ENCODE measurements at regions of chr13 and their contacts with region 1.

Region 1: GRCh38 chr13:93227878-93228642 is 1.5 kb downstream of the GPC6 start:
- DNase-seq: peak; percentile 90
- H3K4me3 ChIP-seq: peak overlapping the region; percentile 45 to 92 (median 84)
- H3K27ac ChIP-seq: peak overlapping the region; percentile 46
- H3K4me1 ChIP-seq: peaks cover 20% of the 10 kb centered on the region
- H3K27me3 ChIP-seq: no peaks in the 10 kb centered on the region
- CTCF ChIP-seq: peak; percentile 24 to 69

Region 2: GRCh38 chr13:92658293-92658692 is 569.8 kb before region 1 on chr13:
- CTCF ChIA-PET with region 1: no interaction called
- dilution Hi-C with region 1: no loop called
- in situ Hi-C with region 1: no loop called
- intact Hi-C with region 1: no loop called
- DNase-seq: no peak
- H3K4me3 ChIP-seq: no peak overlapping the region
- H3K27ac ChIP-seq: no peak overlapping the region
- H3K4me1 ChIP-seq: no peaks in the 10 kb centered on the region
- H3K27me3 ChIP-seq: no peaks in the 10 kb centered on the region
- CTCF ChIP-seq: no peak

Region 3: GRCh38 chr13:92967923-92968322 is 260.1 kb before region 1 on chr13:
- CTCF ChIA-PET with region 1: no interaction called
- dilution Hi-C with region 1: no loop called
- in situ Hi-C with region 1: no loop called
- intact Hi-C with region 1: loop called (anchors 1 kb)
- DNase-seq: peak; percentile 9
- H3K4me3 ChIP-seq: no peak overlapping the region
- H3K27ac ChIP-seq: no peak overlapping the region
- H3K4me1 ChIP-seq: no peaks in the 10 kb centered on the region
- H3K27me3 ChIP-seq: no peaks in the 10 kb centered on the region
- CTCF ChIP-seq: peak; percentile 21 to 56

Region 4: DNA sequence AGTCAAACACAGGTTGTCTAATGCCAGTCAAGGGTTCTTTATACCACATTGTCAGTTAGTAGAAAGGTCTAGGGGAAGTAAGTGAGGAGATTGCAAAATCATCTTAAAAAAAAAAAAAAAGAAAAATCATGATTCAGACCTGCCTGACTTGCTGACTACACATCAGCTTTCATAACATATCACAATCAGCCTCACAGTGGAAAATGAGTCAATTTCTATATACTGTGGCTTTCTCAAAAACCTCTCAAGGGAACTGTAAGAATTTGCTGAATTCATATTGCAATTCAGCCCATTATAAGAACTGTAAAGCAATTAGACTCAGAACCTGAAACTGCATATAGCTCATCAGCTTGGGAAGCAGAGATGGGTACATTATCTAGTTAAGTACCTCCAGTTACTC is 76.8 kb before region 1 on chr13:
- CTCF ChIA-PET with region 1: no interaction called
- dilution Hi-C with region 1: no loop called
- in situ Hi-C with region 1: no loop called
- intact Hi-C with region 1: loop called (anchors 2 kb)
- DNase-seq: peak; percentile 87
- H3K4me3 ChIP-seq: no peak overlapping the region
- H3K27ac ChIP-seq: peak overlapping the region; percentile 22
- H3K4me1 ChIP-seq: peaks cover 21% of the 10 kb centered on the region
- H3K27me3 ChIP-seq: no peaks in the 10 kb centered on the region
- CTCF ChIP-seq: no peak

Region 5: GRCh38 chr13:93217721-93218261 is 10.3 kb before region 1 on chr13:
- CTCF ChIA-PET with region 1: no interaction called
- dilution Hi-C with region 1: no loop called
- in situ Hi-C with region 1: no loop called
- intact Hi-C with region 1: no loop called
- DNase-seq: peak; percentile 94
- H3K4me3 ChIP-seq: no peak overlapping the region
- H3K27ac ChIP-seq: peak overlapping the region; percentile 70
- H3K4me1 ChIP-seq: peaks cover 17% of the 10 kb centered on the region
- H3K27me3 ChIP-seq: no peaks in the 10 kb centered on the region
- CTCF ChIP-seq: no peak

Region 6: DNA sequence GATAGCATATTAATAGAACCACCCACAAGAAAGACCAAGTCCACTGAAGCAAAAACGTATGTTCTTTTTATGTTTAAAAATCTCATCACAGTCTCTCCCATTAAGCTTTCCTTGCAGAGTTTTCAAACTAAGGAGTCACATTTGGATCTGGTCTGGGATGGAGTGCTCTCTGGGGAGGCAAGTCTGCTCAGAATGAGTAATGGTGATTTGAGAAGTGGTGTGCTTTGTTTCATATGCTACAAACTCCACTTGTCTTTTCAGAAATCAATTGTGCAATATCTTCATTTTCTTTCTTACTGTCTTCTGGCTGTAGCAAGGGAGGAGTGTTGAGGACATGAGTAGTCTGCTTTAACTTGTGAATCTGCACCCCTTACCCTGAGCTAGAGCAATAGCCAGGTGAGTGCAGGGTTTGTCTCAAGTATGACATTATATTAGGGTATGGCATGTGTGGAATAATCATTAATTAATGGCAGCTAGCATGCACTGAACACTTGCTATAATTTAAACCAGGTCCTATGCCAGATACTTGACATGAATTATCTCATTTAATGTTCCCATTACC is 170.2 kb after region 1 on chr13:
- CTCF ChIA-PET with region 1: no interaction called
- dilution Hi-C with region 1: no loop called
- in situ Hi-C with region 1: no loop called
- intact Hi-C with region 1: loop called (anchors 5 kb)
- DNase-seq: no peak
- H3K4me3 ChIP-seq: no peak overlapping the region
- H3K27ac ChIP-seq: no peak overlapping the region
- H3K4me1 ChIP-seq: no peaks in the 10 kb centered on the region
- H3K27me3 ChIP-seq: no peaks in the 10 kb centered on the region
- CTCF ChIP-seq: no peak

Region 7: GRCh38 chr13:93680329-93680728 is 452.3 kb after region 1 on chr13:
- CTCF ChIA-PET with region 1: no interaction called
- dilution Hi-C with region 1: no loop called
- in situ Hi-C with region 1: no loop called
- intact Hi-C with region 1: loop called (anchors 5 kb)
- DNase-seq: no peak
- H3K4me3 ChIP-seq: no peak overlapping the region
- H3K27ac ChIP-seq: no peak overlapping the region
- H3K4me1 ChIP-seq: no peaks in the 10 kb centered on the region
- H3K27me3 ChIP-seq: no peaks in the 10 kb centered on the region
- CTCF ChIP-seq: no peak

Region 8: DNA sequence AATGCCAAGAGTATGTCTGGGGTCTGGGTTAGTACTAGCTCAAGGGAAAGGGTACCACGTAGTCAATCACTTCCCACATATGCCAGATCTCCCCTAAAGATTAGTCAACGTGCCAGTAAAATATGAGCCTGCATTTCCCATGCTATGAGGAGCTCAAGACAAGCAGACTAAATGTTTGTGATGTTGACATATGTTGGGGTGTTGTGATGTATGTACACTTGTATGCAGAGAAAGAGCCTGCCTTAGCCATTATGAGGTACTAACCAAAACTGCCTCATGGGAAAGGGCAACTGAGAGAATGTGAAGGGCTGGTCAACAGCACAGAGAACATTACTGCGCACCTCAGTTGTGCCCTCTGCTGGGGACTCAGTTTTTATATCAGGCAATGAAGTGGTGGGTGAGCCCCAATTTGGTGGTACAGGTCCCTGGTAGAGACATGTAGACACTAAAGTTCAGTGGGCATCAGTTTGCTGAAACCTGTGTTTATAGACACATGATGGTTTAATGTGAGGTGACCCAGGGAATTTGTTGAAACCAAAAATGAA is 964.4 kb after region 1 on chr13:
- CTCF ChIA-PET with region 1: no interaction called
- dilution Hi-C with region 1: no loop called
- in situ Hi-C with region 1: no loop called
- intact Hi-C with region 1: loop called (anchors 2 kb)
- DNase-seq: peak; percentile 12
- H3K4me3 ChIP-seq: no peak overlapping the region
- H3K27ac ChIP-seq: no peak overlapping the region
- H3K4me1 ChIP-seq: peaks cover 14% of the 10 kb centered on the region
- H3K27me3 ChIP-seq: no peaks in the 10 kb centered on the region
- CTCF ChIP-seq: peak; percentile 22 to 53

Measured in mammary epithelial cell (primary cell).